GM10248 (cell line): ENCODE measurements at regions of chr6 and their contacts with region 1.

Region 1: DNA sequence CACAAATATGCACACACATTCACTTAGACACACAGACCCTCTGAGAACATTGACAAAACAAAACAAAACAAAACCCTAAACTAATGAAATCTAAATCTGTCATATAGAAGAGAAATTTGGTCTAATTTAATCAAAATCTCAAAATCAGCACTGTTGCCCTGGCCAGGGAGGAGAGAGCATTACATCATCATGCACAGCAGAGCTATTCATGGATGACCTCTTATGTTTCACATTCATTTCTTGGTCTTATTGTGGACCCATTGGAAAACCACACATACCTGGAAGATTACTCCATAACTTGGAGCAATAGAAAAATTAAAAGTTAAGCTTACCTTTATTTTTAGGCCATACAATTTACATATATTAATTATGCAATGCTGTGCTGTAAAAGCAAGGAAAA is 1223.6 kb upstream of the GJE1 start:
- DNase-seq: no peak
- CTCF ChIP-seq: no peak

Region 2: DNA sequence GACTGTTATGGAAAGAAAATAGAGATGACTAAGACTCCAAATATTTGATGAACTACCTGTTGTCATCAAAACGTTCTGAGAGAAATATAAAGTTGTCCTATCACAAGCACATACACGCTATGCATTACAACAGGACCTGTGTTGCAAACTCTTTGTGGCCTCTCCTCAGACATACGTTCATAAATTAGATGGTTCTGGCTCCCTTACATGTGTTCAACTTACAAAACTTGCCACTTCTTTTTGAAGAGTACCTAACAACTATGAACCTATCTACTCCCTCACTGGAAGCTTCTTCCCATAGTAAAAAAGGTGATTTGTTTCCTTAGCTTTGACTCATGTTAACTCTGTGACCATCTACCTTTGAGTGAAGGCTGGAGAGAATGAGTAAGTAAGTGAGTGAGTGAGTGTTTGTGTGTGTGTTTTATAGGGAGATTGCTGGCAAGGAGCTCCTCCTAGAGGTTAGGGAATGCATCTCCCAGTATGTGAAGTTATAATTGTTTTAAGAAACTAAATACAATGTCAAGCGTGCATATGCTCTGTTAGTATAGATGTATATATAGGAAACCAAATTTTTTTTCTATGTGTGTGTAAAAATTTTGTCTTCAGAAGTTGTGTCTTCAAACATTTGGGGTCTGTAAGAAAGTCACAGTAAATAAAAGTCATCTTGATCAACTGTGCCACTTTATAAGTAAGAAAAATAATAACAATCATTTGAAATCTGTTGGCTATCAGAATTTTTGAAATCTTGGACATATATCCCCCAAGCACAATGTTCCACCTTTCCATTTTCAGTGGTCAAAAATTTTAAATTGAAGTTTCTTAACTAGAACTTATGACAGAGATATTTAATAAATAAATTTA is 12.4 kb after region 1 on chr6:
- CTCF ChIA-PET with region 1: interaction called, 12 read pairs
- POLR2A ChIA-PET with region 1: no interaction called
- DNase-seq: peak; percentile 8
- CTCF ChIP-seq: peak; percentile 24

Region 3: GRCh38 chr6:140970485-140970884 is 61.3 kb after region 1 on chr6:
- CTCF ChIA-PET with region 1: no interaction called
- POLR2A ChIA-PET with region 1: no interaction called
- DNase-seq: no peak
- CTCF ChIP-seq: no peak

Region 4: GRCh38 chr6:141077355-141078333 is 168.5 kb after region 1 on chr6:
- CTCF ChIA-PET with region 1: no interaction called
- POLR2A ChIA-PET with region 1: no interaction called
- DNase-seq: no peak
- CTCF ChIP-seq: peak; percentile 30